Motor neuron (in vitro differentiated cells): ENCODE measurements at regions of chr20 and their contacts with region 1.

Region 1: GRCh38 chr20:32231847-32232246 is 24.2 kb downstream of the POFUT1 start:
- ATAC-seq: no peak
- H3K4me3 ChIP-seq: no peak overlapping the region
- H3K27ac ChIP-seq: no peak overlapping the region
- H3K4me1 ChIP-seq: no peaks in the 10 kb centered on the region

Region 2: GRCh38 chr20:32132911-32133549 is 98.8 kb before region 1 on chr20:
- in situ Hi-C with region 1: loop called in 1 of 9 experiments (anchors 25 kb)
- ATAC-seq: no peak
- H3K4me3 ChIP-seq: no peak overlapping the region
- H3K27ac ChIP-seq: no peak overlapping the region
- H3K4me1 ChIP-seq: no peaks in the 10 kb centered on the region